Calu3 (cell line): ENCODE measurements at regions of chr14 and their contacts with region 1.

Region 1: DNA sequence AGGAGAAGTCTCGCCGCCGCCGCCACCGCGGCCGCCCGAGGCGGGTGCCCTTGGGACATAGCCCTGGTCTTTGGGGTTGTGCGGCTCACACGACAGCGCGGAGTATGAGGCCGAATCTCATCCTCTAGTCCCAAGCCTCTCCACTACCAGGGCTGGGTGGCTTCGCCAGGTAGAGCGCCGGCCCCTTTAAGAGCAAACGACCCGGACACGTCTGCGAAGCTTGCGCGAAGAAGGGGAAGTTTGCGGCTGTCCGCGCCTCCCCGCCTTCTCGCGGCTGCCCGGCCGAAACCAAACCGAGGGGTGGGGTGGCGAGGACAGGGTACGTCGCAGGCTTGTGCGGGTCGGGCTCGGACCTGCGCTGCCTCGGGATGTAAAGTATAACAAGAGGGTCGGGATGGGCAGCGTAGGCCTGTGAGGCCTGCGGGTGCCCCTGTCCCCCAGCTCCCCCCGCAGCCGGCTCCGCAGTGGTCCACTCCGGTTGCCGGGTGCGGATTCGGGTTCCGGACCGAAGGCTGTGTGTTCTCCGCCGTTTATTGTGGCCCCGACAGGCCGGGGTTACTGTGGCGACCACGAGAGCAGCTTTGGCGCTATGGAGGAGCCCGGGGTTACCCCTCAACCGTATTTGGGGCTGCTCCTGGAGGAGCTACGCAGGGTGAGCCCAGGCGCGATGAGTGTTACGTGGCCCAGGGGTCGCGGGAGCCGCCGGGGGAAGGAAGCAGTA is 33.3 kb downstream of the MIA2 start:
- DNase-seq: peak; percentile 76
- H3K4me3 Mint-ChIP-seq: peak overlapping the region; percentile 75
- H3K27ac Mint-ChIP-seq: peak overlapping the region; percentile 85
- H3K4me1 Mint-ChIP-seq: peaks cover 31% of the 10 kb centered on the region
- H3K27me3 Mint-ChIP-seq: no peaks in the 10 kb centered on the region
- CTCF ChIP-seq: no peak

Region 2: GRCh38 chr14:39368261-39368959 is 101.4 kb after region 1 on chr14:
- CTCF ChIA-PET with region 1: no interaction called
- intact Hi-C with region 1: loop called (anchors 5 kb)
- DNase-seq: peak; percentile 62
- H3K4me3 Mint-ChIP-seq: no peak overlapping the region
- H3K27ac Mint-ChIP-seq: no peak overlapping the region
- H3K4me1 Mint-ChIP-seq: peaks cover 9% of the 10 kb centered on the region
- H3K27me3 Mint-ChIP-seq: no peaks in the 10 kb centered on the region
- CTCF ChIP-seq: peak; percentile 58

Region 3: GRCh38 chr14:39426605-39427004 is 159.6 kb after region 1 on chr14:
- CTCF ChIA-PET with region 1: no interaction called
- intact Hi-C with region 1: no loop called
- DNase-seq: no peak
- H3K4me3 Mint-ChIP-seq: no peak overlapping the region
- H3K27ac Mint-ChIP-seq: peak overlapping the region; percentile 52
- H3K4me1 Mint-ChIP-seq: peaks cover 32% of the 10 kb centered on the region
- H3K27me3 Mint-ChIP-seq: no peaks in the 10 kb centered on the region
- CTCF ChIP-seq: no peak